Vagina (tissue), 2 donors: ENCODE measurements at regions of chr1 and their contacts with region 1.

Region 1: DNA sequence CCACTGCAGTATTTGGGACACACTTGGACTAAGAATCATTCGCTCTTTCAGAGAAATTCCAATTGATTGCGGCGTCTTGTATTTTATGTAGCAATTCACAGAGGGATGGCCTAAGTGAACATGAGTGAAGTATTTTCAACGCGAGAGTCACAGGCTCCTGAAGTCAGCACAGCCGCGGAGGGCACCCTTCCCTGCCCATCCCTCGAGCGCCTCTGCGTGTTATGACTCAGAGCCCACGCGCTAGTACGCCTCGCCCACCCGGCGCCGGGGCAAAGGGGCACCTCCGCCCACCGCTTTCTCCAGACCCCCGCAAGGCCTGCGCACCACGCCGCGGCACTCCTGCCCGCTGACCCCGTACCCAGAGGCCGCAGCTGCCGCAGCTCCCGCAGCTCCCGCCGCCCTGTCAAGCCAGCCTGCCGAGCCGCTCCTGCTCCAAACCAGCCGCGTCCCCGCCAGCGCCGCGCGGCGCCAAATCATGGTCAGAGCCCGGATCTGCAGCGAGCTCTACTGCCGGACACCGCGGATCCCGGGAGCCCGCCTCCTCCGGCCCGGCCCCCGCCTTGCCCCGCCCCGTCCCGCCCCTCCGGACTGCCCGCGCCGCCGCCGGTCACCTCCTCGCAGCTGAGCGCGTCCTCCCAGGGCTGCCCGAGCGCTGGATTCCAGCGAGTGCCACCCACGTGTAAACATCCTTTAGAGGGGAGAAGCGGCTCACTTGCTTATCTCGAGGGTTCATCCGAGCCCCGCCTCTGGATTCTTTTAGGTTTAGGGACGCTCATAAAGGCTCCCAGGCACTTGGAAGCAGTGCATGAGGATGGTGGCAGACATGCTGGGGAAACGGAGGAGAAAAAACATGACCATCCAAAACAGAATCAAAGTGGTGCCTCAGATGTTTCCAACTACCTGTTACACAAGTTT is at the start of gene GLRX2:
- DNase-seq: peak in 1 of 2 donors; percentile 93
- H3K4me3 ChIP-seq: peak within 1 kb of the TSS; percentile 70
- H3K27ac ChIP-seq: peak within 1 kb of the TSS; percentile 79
- H3K4me1 ChIP-seq: peaks cover 19% of the 10 kb centered on the region
- H3K27me3 ChIP-seq: no peaks in the 10 kb centered on the region
- CTCF ChIP-seq: no peak
- POLR2A ChIP-seq: peak in 1 of 2 donors; percentile 57
- total RNA-seq, gene GLRX2: 2.7 TPM

Region 2: GRCh38 chr1:191255354-191256054 is 1849.7 kb before region 1 on chr1:
- intact Hi-C with region 1: no loop called
- DNase-seq: no peak
- H3K4me3 ChIP-seq: no peak overlapping the region
- H3K27ac ChIP-seq: no peak overlapping the region
- H3K4me1 ChIP-seq: no peaks in the 10 kb centered on the region
- H3K27me3 ChIP-seq: no peaks in the 10 kb centered on the region
- CTCF ChIP-seq: no peak
- POLR2A ChIP-seq: no peak

Region 3: DNA sequence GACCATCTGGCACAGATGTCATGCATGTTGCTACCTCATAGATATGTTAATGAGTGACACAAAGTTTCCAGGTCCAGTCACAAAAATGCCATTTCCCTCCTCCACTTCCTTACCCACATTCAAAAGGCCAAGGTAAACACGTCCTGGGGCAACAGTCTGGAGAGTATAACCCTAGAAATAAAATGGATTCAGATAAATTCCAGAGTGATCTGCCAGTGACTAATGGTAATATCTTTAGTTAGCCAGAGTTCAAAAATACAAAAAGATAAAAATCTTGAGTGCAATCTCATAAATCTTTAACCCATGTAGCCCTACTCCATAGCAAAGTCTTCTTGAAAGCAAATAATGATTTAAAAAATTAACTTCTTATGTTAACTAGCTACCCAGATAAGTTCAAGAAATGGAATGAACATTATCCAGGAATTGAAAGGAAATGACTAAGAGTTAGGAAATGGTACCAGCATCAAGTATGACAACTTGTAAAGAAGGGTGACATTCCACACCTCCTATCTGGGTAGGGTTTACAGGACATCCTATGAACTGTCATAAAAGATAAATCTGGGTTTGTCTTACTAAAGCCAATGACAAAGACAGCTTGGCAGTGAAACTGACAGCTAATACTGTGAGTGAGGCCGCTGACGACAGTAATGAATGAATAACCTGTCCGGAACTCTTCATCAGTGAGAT is 278.2 kb before region 1 on chr1:
- intact Hi-C with region 1: no loop called
- DNase-seq: no peak
- H3K4me3 ChIP-seq: no peak overlapping the region
- H3K27ac ChIP-seq: no peak overlapping the region
- H3K4me1 ChIP-seq: no peaks in the 10 kb centered on the region
- H3K27me3 ChIP-seq: no peaks in the 10 kb centered on the region
- CTCF ChIP-seq: no peak
- POLR2A ChIP-seq: no peak

Region 4: GRCh38 chr1:193019442-193020026 is 85.6 kb before region 1 on chr1:
- intact Hi-C with region 1: no loop called
- DNase-seq: no peak
- H3K4me3 ChIP-seq: no peak overlapping the region
- H3K27ac ChIP-seq: no peak overlapping the region
- H3K4me1 ChIP-seq: no peaks in the 10 kb centered on the region
- H3K27me3 ChIP-seq: no peaks in the 10 kb centered on the region
- CTCF ChIP-seq: peak; percentile 17 to 61 (median 48)
- POLR2A ChIP-seq: no peak

Region 5: GRCh38 chr1:193059268-193060225 is 45.6 kb before region 1 on chr1 and contains the starts of genes RO60 and UCHL5:
- intact Hi-C with region 1: loop called (anchors 5 kb)
- DNase-seq: peak; percentile 97 to 98
- H3K4me3 ChIP-seq: peak within 1 kb of the TSS; percentile 73 to 90
- H3K27ac ChIP-seq: peak within 1 kb of the TSS; percentile 94
- H3K4me1 ChIP-seq: peaks cover 53% of the 10 kb centered on the region
- H3K27me3 ChIP-seq: no peaks in the 10 kb centered on the region
- CTCF ChIP-seq: peak in 1 of 3 experiments; percentile 5
- POLR2A ChIP-seq: peak in 1 of 2 donors; percentile 83
- total RNA-seq, gene RO60: 79.8 TPM
- total RNA-seq, gene UCHL5: 17.4 TPM

Region 6: GRCh38 chr1:193121616-193122593 is 16.7 kb after region 1 on chr1 and contains the start of gene CDC73:
- intact Hi-C with region 1: loop called (anchors 2 kb)
- DNase-seq: peak; percentile 96 to 97
- H3K4me3 ChIP-seq: peak within 1 kb of the TSS; percentile 67 to 82
- H3K27ac ChIP-seq: peak within 1 kb of the TSS; percentile 89
- H3K4me1 ChIP-seq: peaks cover 31% of the 10 kb centered on the region
- H3K27me3 ChIP-seq: no peaks in the 10 kb centered on the region
- CTCF ChIP-seq: peak; percentile 86 to 98 (median 86)
- POLR2A ChIP-seq: peak in 1 of 2 donors; percentile 82
- total RNA-seq, gene CDC73: 28.5 TPM

Region 7: GRCh38 chr1:193234530-193234929 is 129.4 kb after region 1 on chr1:
- intact Hi-C with region 1: no loop called
- DNase-seq: no peak
- H3K4me3 ChIP-seq: no peak overlapping the region
- H3K27ac ChIP-seq: no peak overlapping the region
- H3K4me1 ChIP-seq: no peaks in the 10 kb centered on the region
- H3K27me3 ChIP-seq: no peaks in the 10 kb centered on the region
- CTCF ChIP-seq: no peak
- POLR2A ChIP-seq: no peak